Dendritic cell treated with granulocyte-macrophage colony-stimulating factor and Interleukin-4, amounts not matched to agents 40 ng/mL and 50 ng/mL, for 4 days (primary cell): ENCODE measurements at regions of chr10 and their contacts with region 1.

Region 1: GRCh38 chr10:21495752-21496342 is 29.6 kb downstream of the SKIDA1 start:
- H3K4me3 Mint-ChIP-seq: peak overlapping the region; percentile 81
- H3K27ac Mint-ChIP-seq: no peak overlapping the region
- H3K4me1 Mint-ChIP-seq: peaks cover 30% of the 10 kb centered on the region
- H3K27me3 Mint-ChIP-seq: peaks cover 76% of the 10 kb centered on the region

Region 2: GRCh38 chr10:21278491-21279239 is 217.2 kb before region 1 on chr10:
- intact Hi-C with region 1: loop called (anchors 5 kb)
- H3K4me3 Mint-ChIP-seq: no peak overlapping the region
- H3K27ac Mint-ChIP-seq: no peak overlapping the region
- H3K4me1 Mint-ChIP-seq: no peaks in the 10 kb centered on the region
- H3K27me3 Mint-ChIP-seq: peaks cover 1% of the 10 kb centered on the region

Region 3: DNA sequence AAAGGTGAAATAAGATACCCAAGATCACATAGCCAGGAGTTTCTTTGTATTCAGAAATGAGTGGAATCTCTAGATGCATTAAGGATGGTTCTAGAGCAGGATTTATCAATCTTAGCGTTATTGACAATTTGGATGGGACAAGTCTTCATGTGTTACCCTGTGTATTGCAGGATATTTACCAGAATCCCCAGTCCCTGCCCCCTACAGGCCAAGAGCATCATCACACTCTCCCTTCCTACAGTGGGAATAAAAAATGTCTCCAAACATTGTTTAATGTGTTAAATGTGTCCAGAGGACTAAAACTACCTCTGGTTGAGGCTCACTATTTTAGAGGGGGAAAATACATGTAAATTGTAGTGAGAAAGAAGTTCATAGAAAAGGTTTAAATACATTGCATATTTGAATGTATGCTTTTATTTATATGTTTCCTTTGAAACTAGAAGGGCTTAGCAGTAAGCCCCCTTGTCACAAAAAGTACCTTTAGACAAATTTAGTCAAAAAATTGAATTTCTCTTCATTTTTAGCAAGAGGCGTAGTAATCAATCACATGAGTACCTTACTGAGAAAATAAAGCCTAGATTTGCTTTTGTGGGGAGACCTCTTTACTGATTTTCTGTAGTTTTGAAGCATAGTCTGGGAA is 179.4 kb after region 1 on chr10:
- intact Hi-C with region 1: loop called (anchors 2 kb)
- H3K4me3 Mint-ChIP-seq: no peak overlapping the region
- H3K27ac Mint-ChIP-seq: no peak overlapping the region
- H3K4me1 Mint-ChIP-seq: peaks cover 9% of the 10 kb centered on the region
- H3K27me3 Mint-ChIP-seq: no peaks in the 10 kb centered on the region

Region 4: DNA sequence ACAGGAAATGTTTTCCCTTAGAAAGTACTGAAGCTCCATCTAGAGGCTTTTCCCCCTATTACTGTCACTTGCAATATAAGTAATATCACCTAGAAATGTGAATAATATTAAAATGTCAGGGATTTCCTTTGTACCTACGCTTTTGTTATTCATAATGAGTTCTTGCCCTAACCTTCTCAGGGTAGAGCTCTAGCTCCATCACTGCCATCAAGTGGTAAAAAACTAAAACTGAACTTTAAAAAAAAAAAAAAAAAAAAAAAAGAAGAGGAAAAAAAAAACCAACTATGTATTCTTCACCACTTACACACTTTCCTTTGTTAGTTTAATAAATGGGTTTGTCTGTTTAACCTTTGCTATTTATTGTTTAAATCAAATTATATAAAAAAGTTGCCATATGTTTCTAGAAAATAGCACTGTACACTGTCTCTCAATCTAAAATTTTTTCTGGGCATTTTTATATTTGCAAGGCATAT is 457.8 kb after region 1 on chr10:
- intact Hi-C with region 1: loop called (anchors 5 kb)
- H3K4me3 Mint-ChIP-seq: no peak overlapping the region
- H3K27ac Mint-ChIP-seq: no peak overlapping the region
- H3K4me1 Mint-ChIP-seq: no peaks in the 10 kb centered on the region
- H3K27me3 Mint-ChIP-seq: no peaks in the 10 kb centered on the region

Region 5: GRCh38 chr10:22251751-22252223 is 755.9 kb after region 1 on chr10:
- intact Hi-C with region 1: loop called (anchors 10 kb)
- H3K4me3 Mint-ChIP-seq: peak overlapping the region; percentile 93
- H3K27ac Mint-ChIP-seq: peak overlapping the region; percentile 99
- H3K4me1 Mint-ChIP-seq: peaks cover 17% of the 10 kb centered on the region
- H3K27me3 Mint-ChIP-seq: no peaks in the 10 kb centered on the region